ENCODE measurements at regions of chr5 and their contacts with region 1.

Region 1: GRCh38 chr5:64147849-64148441 is 17.7 kb upstream of the RNF180 start:
- DNase-seq: peak; percentile 60
- H3K4me3 Mint-ChIP-seq: no peak overlapping the region
- H3K27ac Mint-ChIP-seq: no peak overlapping the region
- H3K4me1 Mint-ChIP-seq: peaks cover 8% of the 10 kb centered on the region
- H3K27me3 Mint-ChIP-seq: no peaks in the 10 kb centered on the region
- CTCF ChIP-seq: peak; percentile 88

Region 2: GRCh38 chr5:64074533-64074932 is 73.4 kb before region 1 on chr5:
- CTCF ChIA-PET with region 1: interaction called, 5 read pairs
- POLR2A ChIA-PET with region 1: no interaction called
- intact Hi-C with region 1: loop called (anchors 1 kb)
- DNase-seq: peak; percentile 53
- H3K4me3 Mint-ChIP-seq: no peak overlapping the region
- H3K27ac Mint-ChIP-seq: no peak overlapping the region
- H3K4me1 Mint-ChIP-seq: no peaks in the 10 kb centered on the region
- H3K27me3 Mint-ChIP-seq: peaks cover 15% of the 10 kb centered on the region
- CTCF ChIP-seq: peak; percentile 62

Region 3: DNA sequence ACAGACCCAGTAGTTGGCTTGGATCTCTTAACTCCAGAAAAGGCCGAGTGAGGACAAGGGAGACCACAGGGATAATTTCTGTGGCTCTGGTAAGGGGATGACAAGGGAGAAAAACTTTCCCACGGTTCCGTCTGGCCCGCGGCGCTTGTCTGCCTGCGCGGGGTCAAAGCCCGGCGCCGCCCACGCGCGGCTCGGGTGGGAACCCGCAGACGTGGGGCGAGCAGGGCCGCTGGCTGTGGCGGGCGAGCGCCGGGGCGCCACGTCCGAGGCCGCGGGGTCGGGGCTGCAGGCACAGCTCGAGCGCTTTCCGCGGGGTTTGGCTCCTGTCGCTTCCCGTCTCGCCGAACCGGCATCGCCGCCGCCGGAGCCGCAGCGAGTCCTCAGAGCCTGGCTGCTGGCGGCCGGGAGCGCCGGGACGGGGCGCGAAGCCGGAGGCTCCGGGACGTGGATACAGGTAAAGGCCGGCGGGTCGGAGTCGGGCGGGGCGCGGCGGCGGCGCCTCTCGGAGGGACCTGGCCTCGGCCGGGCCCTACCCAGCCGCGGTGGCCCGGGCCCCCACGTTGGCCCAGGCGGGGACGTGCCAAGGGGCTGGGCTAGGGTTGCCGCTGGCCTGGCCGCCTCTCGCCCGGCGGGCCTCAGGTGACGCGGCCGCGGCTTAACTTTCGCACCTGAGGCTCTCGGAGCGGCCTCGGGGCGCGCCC is 17.7 kb after region 1 on chr5 and contains the start of gene RNF180:
- CTCF ChIA-PET with region 1: interaction called, 48 read pairs
- POLR2A ChIA-PET with region 1: interaction called, 3 read pairs
- intact Hi-C with region 1: no loop called
- DNase-seq: peak; percentile 39
- H3K4me3 Mint-ChIP-seq: peak within 1 kb of the TSS; percentile 78
- H3K27ac Mint-ChIP-seq: peak within 1 kb of the TSS; percentile 83
- H3K4me1 Mint-ChIP-seq: peaks cover 6% of the 10 kb centered on the region
- H3K27me3 Mint-ChIP-seq: no peaks in the 10 kb centered on the region
- CTCF ChIP-seq: no peak
- total RNA-seq, gene RNF180: 6.0 and 7.4 TPM in 2 replicates

Region 4: DNA sequence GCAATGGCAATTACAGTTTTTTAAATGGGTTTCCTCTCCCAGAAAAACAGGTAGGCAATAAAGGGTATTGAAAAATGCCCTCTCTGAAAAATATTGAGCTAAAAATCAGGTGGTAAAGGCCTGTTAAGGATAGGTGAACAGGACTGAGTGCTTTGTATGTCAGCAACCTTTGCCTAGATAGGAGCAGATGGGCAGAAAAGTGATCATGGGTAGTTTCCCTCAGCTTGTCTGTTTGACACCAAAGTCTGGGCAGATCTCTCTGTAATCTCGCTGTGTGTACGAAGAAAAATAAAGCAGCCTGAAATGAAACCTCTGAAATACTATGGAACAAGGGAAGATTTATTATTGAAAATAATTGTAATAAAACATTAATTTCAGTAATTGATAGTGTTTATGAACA is 33.5 kb after region 1 on chr5:
- CTCF ChIA-PET with region 1: interaction called, 13 read pairs
- POLR2A ChIA-PET with region 1: no interaction called
- intact Hi-C with region 1: no loop called
- DNase-seq: no peak
- H3K4me3 Mint-ChIP-seq: no peak overlapping the region
- H3K27ac Mint-ChIP-seq: peak overlapping the region; percentile 59
- H3K4me1 Mint-ChIP-seq: peaks cover 14% of the 10 kb centered on the region
- H3K27me3 Mint-ChIP-seq: no peaks in the 10 kb centered on the region
- CTCF ChIP-seq: no peak

Region 5: DNA sequence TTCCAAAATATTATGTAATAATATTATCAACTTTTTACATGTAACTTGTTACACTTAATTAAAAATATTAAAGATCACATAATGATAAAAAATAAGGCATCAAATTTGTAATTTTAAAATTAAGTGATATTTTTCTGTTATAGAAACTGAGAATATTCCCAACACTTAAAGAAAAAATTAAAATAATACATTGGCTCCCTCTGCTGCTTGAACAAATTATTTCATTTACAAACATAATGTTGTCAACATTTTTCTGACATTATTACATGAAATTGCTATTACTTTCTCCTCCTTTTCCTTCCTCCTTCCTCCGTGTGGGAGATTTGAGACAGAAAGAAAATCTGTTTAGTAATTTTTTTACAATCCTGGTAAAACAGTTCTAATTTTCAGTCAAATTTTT is 60.0 kb after region 1 on chr5:
- CTCF ChIA-PET with region 1: interaction called, 157 read pairs
- POLR2A ChIA-PET with region 1: interaction called, 3 read pairs
- intact Hi-C with region 1: loop called (anchors 1 kb)
- DNase-seq: peak; percentile 34
- H3K4me3 Mint-ChIP-seq: no peak overlapping the region
- H3K27ac Mint-ChIP-seq: no peak overlapping the region
- H3K4me1 Mint-ChIP-seq: peaks cover 24% of the 10 kb centered on the region
- H3K27me3 Mint-ChIP-seq: no peaks in the 10 kb centered on the region
- CTCF ChIP-seq: peak; percentile 43

Region 6: DNA sequence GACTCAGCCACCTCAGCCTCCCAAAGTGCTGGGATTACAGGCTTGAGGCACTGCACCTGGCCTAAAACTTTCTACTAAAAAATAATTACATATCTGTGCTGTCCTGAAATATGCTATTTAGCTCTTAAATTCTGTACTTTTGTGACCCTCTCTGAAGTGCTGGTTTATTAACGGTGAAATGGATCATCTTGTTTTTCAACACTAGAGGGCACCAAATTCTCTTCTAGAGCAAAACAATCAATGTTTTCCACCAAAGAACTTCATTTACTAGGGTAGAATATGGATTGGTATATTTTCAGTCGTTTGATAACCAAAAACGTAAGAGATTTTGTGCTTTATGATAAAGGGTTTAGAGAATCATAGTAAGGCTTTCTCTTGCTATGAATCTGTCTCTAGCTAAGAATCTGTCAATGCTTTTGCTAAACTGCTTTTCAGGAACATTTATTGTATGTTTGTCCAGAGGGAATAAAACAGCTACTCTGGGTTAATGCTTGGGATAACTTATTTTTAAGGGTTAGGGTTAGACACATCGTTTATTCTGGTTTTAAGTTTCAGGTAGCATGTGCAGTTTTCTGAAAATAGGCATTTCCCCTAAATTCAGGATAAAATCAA is 81.3 kb after region 1 on chr5:
- CTCF ChIA-PET with region 1: interaction called, 12 read pairs
- POLR2A ChIA-PET with region 1: no interaction called
- intact Hi-C with region 1: no loop called
- DNase-seq: peak; percentile 49
- H3K4me3 Mint-ChIP-seq: no peak overlapping the region
- H3K27ac Mint-ChIP-seq: no peak overlapping the region
- H3K4me1 Mint-ChIP-seq: no peaks in the 10 kb centered on the region
- H3K27me3 Mint-ChIP-seq: no peaks in the 10 kb centered on the region
- CTCF ChIP-seq: peak; percentile 53

Region 7: DNA sequence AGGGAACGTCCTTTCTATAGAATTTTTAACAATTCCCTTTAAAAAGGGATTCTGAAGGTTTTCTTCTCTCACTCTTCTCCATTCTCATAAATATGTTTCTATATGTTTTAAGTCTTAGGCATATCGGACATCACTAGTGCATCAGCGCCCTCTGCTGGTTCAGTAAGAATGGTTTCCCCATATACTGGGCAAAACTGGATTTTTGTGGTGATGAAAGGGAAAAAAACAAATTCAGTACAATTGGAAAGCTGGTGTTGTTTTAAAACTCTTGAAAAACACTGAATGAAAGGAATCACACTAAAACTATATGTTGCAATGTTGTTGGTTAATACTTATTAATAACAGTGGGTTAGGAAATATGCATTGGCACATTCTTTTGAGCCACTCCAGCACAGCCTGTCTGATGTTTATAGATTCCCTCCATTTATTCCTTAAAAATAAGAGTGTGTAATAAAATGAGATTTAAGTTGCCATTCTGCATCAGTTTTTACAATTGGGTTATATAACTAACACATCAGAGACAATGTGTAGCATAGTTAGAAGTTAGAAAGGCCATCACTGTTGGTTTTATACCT is 636.6 kb after region 1 on chr5:
- CTCF ChIA-PET with region 1: interaction called, 6 read pairs
- POLR2A ChIA-PET with region 1: no interaction called
- intact Hi-C with region 1: loop called (anchors 10 kb)
- DNase-seq: peak; percentile 83
- H3K4me3 Mint-ChIP-seq: no peak overlapping the region
- H3K27ac Mint-ChIP-seq: no peak overlapping the region
- H3K4me1 Mint-ChIP-seq: peaks cover 5% of the 10 kb centered on the region
- H3K27me3 Mint-ChIP-seq: no peaks in the 10 kb centered on the region
- CTCF ChIP-seq: peak; percentile 73